ENCODE measurements at regions of chr3 and their contacts with region 1.

Region 1: DNA sequence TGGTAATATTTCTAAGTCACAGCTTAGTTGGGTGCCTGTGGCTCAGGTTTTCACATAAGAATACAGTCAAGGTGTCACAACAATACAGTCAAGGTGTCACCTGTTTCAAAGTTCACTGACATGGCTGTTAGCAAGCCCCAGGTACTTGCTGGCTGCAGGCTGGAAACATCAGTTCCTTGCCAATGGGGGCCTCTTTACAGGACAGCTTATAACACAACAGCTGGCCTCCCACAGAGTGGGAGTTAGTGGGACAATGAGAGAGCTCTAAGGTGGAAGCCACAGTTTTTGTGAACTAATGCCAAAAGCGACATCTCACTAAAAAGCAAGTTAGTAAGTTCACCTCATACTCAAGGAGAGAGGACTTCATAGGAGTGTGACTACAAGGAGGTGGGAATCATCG is 45.4 kb downstream of the GPR156 start:
- DNase-seq: no peak
- H3K4me3 ChIP-seq: no peak overlapping the region
- H3K27ac ChIP-seq: no peak overlapping the region
- H3K4me1 ChIP-seq: peaks cover 0 to 3% (median 0%) of the 10 kb centered on the region in 6 donors
- H3K27me3 ChIP-seq: peaks cover 0 to 16% (median 0%) of the 10 kb centered on the region in 7 donors
- CTCF ChIP-seq: no peak
- POLR2A ChIP-seq: no peak

Region 2: GRCh38 chr3:120417272-120417911 is 177.7 kb after region 1 on chr3:
- intact Hi-C with region 1: loop called (anchors 5 kb)
- DNase-seq: peak; percentile 93
- H3K4me3 ChIP-seq: peak overlapping the region in 7 of 8 donors; percentile 28 to 68 (median 34)
- H3K27ac ChIP-seq: peak overlapping the region in 7 of 8 donors; percentile 57 to 82 (median 67)
- H3K4me1 ChIP-seq: peaks cover 13 to 62% (median 41%) of the 10 kb centered on the region in 6 donors
- H3K27me3 ChIP-seq: no peaks in the 10 kb centered on the region
- CTCF ChIP-seq: peak; percentile 79 to 94 (median 86)
- POLR2A ChIP-seq: no peak